ENCODE measurements at regions of chr7 and their contacts with region 1.

Region 1: DNA sequence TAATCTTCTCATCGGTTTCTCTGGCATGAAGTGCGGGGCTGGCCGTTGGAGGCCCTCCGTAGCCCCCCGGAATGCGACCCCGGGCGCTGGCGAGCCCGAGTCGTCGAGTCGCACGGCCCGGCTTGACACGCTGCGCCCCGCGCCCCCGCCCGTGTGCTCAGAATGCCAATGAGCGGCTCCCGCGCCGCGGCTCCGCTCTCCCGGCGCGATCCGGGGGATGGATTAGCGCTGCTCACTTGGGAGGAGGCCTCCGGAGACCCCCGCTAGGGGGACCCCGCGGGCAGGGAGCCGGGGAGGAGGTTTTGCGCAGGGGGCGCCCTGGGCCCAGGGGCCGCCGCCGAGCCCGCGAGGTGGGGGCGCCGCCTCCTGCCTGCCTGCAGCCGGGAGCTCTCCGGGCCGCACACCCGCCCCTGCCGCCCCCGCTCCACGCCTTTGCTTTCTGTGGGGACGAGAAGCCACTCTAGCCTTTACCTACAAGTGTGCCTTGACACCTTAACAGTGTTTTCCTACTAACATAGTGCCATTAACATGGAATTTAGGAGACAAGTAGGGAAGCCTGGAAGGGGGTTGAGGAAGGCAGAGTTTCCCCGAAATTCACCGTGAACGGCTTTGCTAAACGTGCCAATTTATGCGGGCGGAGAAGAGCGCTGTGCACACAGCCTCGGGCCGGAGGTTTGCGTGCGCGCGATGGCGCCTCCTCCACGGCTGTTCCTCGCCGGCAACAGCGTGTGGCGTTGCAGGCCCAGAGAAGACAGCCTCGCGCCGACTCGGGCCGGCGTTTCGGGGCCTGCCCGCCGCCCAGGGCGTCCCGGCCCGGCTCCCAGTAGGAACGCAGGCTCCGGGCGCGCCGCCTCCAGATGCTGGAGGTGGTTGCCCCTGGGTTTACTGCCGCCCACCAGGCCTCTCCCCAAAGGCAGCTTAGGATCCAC is 7.1 kb downstream of the SHH start:
- DNase-seq: peak; percentile 76
- ATAC-seq: peak; percentile 72
- H3K4me3 ChIP-seq: peak overlapping the region; percentile 68
- H3K27ac ChIP-seq: no peak overlapping the region
- H3K4me1 ChIP-seq: peaks cover 13% of the 10 kb centered on the region; the same call in 1 of the 2 replicates
- H3K27me3 ChIP-seq: peaks cover 20% of the 10 kb centered on the region
- CTCF ChIP-seq: peak; percentile 56

Region 2: GRCh38 chr7:155724327-155725005 is 80.7 kb before region 1 on chr7:
- CTCF ChIA-PET with region 1: no interaction called
- POLR2A ChIA-PET with region 1: no interaction called
- intact Hi-C with region 1: no loop called
- DNase-seq: no peak
- ATAC-seq: no peak
- H3K4me3 ChIP-seq: no peak overlapping the region
- H3K27ac ChIP-seq: no peak overlapping the region
- H3K4me1 ChIP-seq: 0 out of 2 replicates have a peak, but pooled peaks cover 5% of the 10 kb centered on the region
- H3K27me3 ChIP-seq: no peaks in the 10 kb centered on the region
- CTCF ChIP-seq: peak; percentile 27; the same call in 1 of the 2 replicates

Region 3: GRCh38 chr7:155763691-155764437 is 41.3 kb before region 1 on chr7:
- CTCF ChIA-PET with region 1: no interaction called
- POLR2A ChIA-PET with region 1: no interaction called
- intact Hi-C with region 1: no loop called
- DNase-seq: no peak
- ATAC-seq: no peak
- H3K4me3 ChIP-seq: no peak overlapping the region
- H3K27ac ChIP-seq: no peak overlapping the region
- H3K4me1 ChIP-seq: no peaks in the 10 kb centered on the region
- H3K27me3 ChIP-seq: no peaks in the 10 kb centered on the region
- CTCF ChIP-seq: no peak

Region 4: GRCh38 chr7:156473476-156474240 is 668.5 kb after region 1 on chr7:
- CTCF ChIA-PET with region 1: no interaction called
- POLR2A ChIA-PET with region 1: no interaction called
- intact Hi-C with region 1: loop called (anchors 2 kb)
- DNase-seq: peak; percentile 52
- ATAC-seq: peak; percentile 65
- H3K4me3 ChIP-seq: no peak overlapping the region
- H3K27ac ChIP-seq: no peak overlapping the region
- H3K4me1 ChIP-seq: peaks cover 12% of the 10 kb centered on the region
- H3K27me3 ChIP-seq: no peaks in the 10 kb centered on the region
- CTCF ChIP-seq: peak; percentile 88